Cardiac septum (tissue), 1 donor: ENCODE measurements at regions of chr17 and their contacts with region 1.

Region 1: GRCh38 chr17:7989781-7990655 is 12.4 kb upstream of the GUCY2D start:
- DNase-seq: peak; percentile 93

Region 2: DNA sequence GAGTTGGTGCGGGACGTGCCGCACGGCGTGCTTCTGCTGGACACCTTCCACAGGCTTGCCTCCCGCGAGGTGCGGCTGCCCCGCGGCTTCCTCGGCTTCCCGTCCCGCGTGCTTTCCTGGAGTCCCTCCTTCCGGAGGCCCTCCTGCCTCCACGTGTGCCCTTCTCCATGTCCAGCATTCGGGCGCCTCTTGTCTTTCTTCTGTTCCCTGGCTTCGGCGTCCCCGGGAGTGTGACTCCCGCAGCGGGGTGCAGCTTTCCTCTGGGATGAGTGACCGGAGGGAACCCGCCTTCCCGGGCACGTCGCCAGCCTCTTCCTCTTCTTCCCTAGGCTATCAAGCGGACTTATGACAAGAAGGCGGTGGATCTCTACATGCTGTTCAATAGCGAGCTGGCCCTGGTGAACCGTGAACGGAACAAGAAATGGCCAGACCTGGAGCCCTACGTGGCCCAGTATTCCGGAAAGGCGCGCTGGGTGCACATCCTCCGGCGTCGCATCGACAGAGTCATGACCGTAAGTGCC is 249.5 kb before region 1 on chr17:
- intact Hi-C with region 1: loop called (anchors 2 kb)
- DNase-seq: no peak

Region 3: GRCh38 chr17:7825206-7825990 is 164.6 kb before region 1 on chr17:
- intact Hi-C with region 1: loop called (anchors 5 kb)
- DNase-seq: no peak

Region 4: GRCh38 chr17:7862692-7863437 is 127.2 kb before region 1 on chr17:
- intact Hi-C with region 1: loop called (anchors 1 kb)
- DNase-seq: no peak

Region 5: DNA sequence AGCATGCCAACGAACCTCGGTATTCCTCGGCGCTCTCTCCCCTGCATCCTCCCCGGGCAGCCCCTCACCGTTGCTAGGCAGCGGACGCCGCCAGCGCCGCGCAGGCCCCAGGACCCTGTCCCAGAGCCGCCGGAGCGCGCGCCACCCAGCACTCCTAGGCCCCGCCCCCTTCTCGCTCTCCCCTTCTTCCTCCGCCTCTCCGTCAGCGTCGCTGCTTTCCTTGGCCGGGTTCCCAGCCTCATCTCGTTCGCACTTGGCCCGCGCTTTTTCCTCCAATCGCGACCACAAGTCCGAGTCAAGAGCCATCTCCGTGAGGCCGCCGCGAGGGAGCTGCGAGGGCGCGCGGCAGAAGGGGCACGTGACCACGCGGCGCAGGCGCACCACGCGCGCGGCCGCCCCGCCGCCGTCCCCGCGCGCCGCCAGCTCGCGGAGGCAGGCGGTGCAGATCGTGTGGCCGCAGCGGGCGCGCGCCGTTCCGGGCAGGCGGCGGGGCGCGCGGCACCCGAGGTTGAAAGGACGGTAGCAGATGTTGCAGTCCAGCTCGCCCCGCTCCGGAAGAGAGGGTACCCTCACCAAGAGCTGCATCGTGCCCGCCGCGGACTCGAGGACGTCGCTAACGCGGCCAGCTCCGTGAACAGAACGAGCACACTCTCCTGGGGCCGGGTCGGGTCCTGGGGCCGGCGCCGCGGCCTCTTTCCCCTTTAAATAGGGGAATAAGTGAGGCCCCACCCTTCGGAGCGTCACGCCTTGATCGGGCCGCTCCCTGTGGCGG is 74.2 kb before region 1 on chr17 and contains the start of gene RNF227:
- intact Hi-C with region 1: loop called (anchors 2 kb)
- DNase-seq: peak; percentile 94
- total RNA-seq, gene RNF227: 1.00 TPM

Region 6: GRCh38 chr17:8041249-8041928 is 51.4 kb after region 1 on chr17:
- intact Hi-C with region 1: loop called (anchors 1 kb)
- DNase-seq: no peak